ENCODE measurements at regions of chr15 and their contacts with region 1.

Region 1: DNA sequence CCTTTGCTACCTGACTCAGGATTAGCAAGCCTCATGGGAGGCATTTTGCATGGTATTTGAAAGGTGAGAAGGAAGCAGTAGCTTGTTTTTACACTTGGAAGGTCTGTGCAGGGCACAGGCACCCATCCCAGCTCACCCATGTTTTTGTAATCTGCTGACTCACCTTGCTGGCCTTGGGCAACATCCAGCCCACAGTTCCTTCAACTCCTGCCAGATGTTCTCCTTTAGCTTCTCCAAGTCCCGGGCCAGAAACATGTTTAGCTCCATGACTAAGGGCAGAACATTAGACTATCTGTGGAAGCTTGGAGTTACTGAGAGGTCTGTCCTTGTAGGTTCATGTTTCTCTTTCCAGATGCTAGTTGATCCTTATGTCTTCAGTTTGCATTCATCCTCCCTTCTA is 12.4 kb upstream of the ZNF770 start:
- DNase-seq: no peak
- ATAC-seq: peak in 2 of 8 donors; percentile 56 to 77
- H3K4me3 ChIP-seq: no peak overlapping the region
- H3K27ac ChIP-seq: no peak overlapping the region
- H3K4me1 ChIP-seq: peaks cover 0 to 12% (median 0%) of the 10 kb centered on the region in 9 donors
- H3K27me3 ChIP-seq: peaks cover 0 to under 1% (median 0%) of the 10 kb centered on the region in 7 donors
- CTCF ChIP-seq: no peak

Region 2: DNA sequence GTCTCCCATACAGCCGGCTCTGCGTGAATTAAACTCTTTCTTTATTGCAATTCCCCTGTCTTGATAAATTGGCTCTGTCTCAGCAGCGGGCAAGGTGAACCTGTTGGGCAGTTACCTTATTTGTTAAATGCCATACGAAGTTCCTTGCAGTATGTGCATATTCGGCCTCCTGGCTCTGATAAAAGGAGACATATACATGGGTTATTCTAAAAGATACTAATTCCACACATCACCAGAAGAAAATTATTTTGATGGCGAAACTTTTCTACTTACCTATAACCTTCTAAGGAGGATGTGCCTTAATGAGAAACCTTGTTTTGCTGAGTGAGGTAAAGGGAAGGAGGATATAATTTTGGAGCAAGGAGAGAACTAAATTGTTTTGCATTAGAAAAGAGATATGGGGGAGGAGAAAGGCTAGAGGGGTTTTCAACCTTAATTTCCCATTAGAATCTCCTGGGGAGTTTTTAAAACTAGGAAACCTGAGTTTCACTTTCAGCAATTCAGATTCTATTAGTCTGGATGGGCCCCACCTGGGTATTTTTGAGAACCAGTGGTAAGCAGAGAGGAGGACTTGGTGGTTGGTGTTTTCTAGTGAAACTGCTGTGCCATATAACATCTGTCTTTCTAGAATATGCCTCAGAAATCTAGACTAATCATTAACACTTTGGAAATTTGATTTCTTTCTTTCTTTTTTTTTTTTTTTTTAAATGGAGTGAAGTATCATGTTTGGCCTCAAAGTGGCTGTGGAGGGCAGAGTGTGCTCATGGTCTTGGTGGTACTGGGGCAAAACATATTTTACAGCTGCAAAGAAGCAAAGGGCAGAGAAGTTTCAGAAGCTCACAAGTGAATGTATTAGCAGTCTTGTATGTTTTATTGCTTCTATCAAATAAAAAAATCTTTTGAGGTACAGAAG is 61.6 kb after region 1 on chr15:
- intact Hi-C with region 1: loop called in 1 of 10 experiments (anchors 10 kb)
- DNase-seq: no peak
- ATAC-seq: no peak
- H3K4me3 ChIP-seq: no peak overlapping the region
- H3K27ac ChIP-seq: no peak overlapping the region
- H3K4me1 ChIP-seq: no peaks in the 10 kb centered on the region
- H3K27me3 ChIP-seq: no peaks in the 10 kb centered on the region
- CTCF ChIP-seq: no peak